ENCODE measurements at regions of chr2 and their contacts with region 1.

Region 1: GRCh38 chr2:191051825-191052778 is 38.1 kb upstream of the STAT1 start:
- DNase-seq: peak; percentile 75
- H3K4me3 ChIP-seq: no peak overlapping the region
- H3K27ac ChIP-seq: no peak overlapping the region
- H3K4me1 ChIP-seq: peaks cover 5% of the 10 kb centered on the region
- H3K27me3 ChIP-seq: peaks cover 4 to 8% of the 10 kb centered on the region in 2 experiments
- CTCF ChIP-seq: peak; percentile 27 to 38
- POLR2A ChIP-seq: no peak

Region 2: GRCh38 chr2:191038241-191038725 is 13.8 kb before region 1 on chr2:
- CTCF ChIA-PET with region 1: interaction called, 56 read pairs
- POLR2A ChIA-PET with region 1: no interaction called
- dilution Hi-C with region 1: no loop called
- intact Hi-C with region 1: no loop called
- DNase-seq: peak; percentile 57
- H3K4me3 ChIP-seq: no peak overlapping the region
- H3K27ac ChIP-seq: no peak overlapping the region
- H3K4me1 ChIP-seq: peaks cover 26% of the 10 kb centered on the region
- H3K27me3 ChIP-seq: no peaks in the 10 kb centered on the region
- CTCF ChIP-seq: no peak
- POLR2A ChIP-seq: no peak

Region 3: DNA sequence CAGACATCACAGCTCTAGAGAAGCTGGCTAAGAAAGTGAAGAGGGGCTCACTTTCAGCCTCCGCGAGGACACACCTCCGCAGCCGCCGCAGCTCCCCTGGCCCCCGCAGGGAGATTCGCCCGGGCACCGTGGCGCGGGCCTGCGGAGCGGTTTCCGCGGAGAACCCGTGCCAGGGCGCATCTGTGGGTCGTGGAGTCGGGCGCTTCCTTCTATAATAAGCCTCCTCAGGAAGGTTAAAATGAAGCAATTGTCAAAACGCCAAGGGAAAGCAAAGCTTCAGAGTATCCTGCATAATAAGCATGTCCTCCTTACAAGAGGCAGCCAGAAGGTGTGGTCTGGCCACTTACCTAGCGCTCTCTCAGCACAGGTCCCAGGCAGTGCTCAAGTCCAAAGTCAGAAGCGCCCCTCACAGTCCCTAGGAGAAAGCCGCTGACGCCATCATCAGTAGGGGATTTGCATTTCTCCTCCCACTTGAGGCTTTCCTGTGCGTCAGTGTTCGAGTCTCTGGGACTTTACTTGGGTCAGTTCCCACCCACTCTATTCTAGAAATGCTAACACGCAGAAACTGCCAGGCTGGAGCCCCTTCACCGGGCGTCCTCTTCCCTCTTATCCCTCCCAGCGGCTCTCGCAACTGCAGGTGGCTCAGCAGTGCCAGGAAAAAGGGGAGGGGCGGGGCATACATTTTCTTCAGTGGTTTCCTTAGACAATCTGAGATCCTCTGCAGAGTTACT is 98.7 kb after region 1 on chr2 and contains the start of gene STAT4:
- CTCF ChIA-PET with region 1: interaction called, 358 read pairs
- POLR2A ChIA-PET with region 1: no interaction called
- dilution Hi-C with region 1: no loop called
- intact Hi-C with region 1: loop called (anchors 1 kb)
- DNase-seq: peak; percentile 58
- H3K4me3 ChIP-seq: peak within 1 kb of the TSS; percentile 13 to 54 (median 45)
- H3K27ac ChIP-seq: no peak within 1 kb of the TSS
- H3K4me1 ChIP-seq: no peaks in the 10 kb centered on the region
- H3K27me3 ChIP-seq: peaks cover 3 to 6% of the 10 kb centered on the region in 2 experiments
- CTCF ChIP-seq: no peak
- POLR2A ChIP-seq: no peak
- total RNA-seq, gene STAT4: 0.46 and 0.88 TPM in 2 replicates

Region 4: GRCh38 chr2:191165176-191165643 is 113.1 kb after region 1 on chr2:
- CTCF ChIA-PET with region 1: interaction called, 38 read pairs
- POLR2A ChIA-PET with region 1: no interaction called
- dilution Hi-C with region 1: no loop called
- intact Hi-C with region 1: no loop called
- DNase-seq: peak; percentile 68
- H3K4me3 ChIP-seq: no peak overlapping the region
- H3K27ac ChIP-seq: no peak overlapping the region
- H3K4me1 ChIP-seq: peaks cover 3% of the 10 kb centered on the region
- H3K27me3 ChIP-seq: no peaks in the 10 kb centered on the region
- CTCF ChIP-seq: peak; percentile 48 to 52
- POLR2A ChIP-seq: no peak

Region 5: DNA sequence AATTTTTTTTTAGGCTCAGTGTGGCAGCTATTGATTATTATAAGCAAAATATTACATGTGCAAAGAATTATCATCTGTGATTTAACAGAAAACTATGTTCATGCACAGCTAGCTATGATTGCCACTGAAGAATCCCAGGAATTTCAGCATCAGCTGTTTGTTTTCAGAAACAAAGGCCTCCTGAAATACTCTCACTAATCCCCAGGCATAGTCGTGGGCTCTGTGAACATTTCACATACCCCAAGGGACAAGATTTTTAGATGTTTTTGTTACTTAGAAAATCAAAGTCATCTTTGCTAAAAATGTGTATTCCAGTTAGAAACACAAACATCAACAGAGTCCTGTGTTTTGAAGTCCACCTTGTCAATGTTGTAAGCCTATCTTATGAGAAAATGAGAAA is 349.2 kb after region 1 on chr2:
- CTCF ChIA-PET with region 1: no interaction called
- POLR2A ChIA-PET with region 1: no interaction called
- dilution Hi-C with region 1: no loop called
- intact Hi-C with region 1: no loop called
- DNase-seq: no peak
- H3K4me3 ChIP-seq: no peak overlapping the region
- H3K27ac ChIP-seq: no peak overlapping the region
- H3K4me1 ChIP-seq: no peaks in the 10 kb centered on the region
- H3K27me3 ChIP-seq: no peaks in the 10 kb centered on the region
- CTCF ChIP-seq: no peak
- POLR2A ChIP-seq: no peak

Region 6: GRCh38 chr2:191515551-191515950 is 463.4 kb after region 1 on chr2:
- CTCF ChIA-PET with region 1: interaction called, 12 read pairs
- POLR2A ChIA-PET with region 1: no interaction called
- dilution Hi-C with region 1: no loop called
- intact Hi-C with region 1: loop called (anchors 2 kb)
- DNase-seq: no peak
- H3K4me3 ChIP-seq: no peak overlapping the region
- H3K27ac ChIP-seq: no peak overlapping the region
- H3K4me1 ChIP-seq: no peaks in the 10 kb centered on the region
- H3K27me3 ChIP-seq: peaks cover 3 to 12% of the 10 kb centered on the region in 2 experiments
- CTCF ChIP-seq: no peak
- POLR2A ChIP-seq: no peak

Region 7: GRCh38 chr2:191611614-191612013 is 559.5 kb after region 1 on chr2:
- CTCF ChIA-PET with region 1: no interaction called
- POLR2A ChIA-PET with region 1: no interaction called
- dilution Hi-C with region 1: no loop called
- intact Hi-C with region 1: no loop called
- DNase-seq: no peak
- H3K4me3 ChIP-seq: no peak overlapping the region
- H3K27ac ChIP-seq: no peak overlapping the region
- H3K4me1 ChIP-seq: peaks cover 9% of the 10 kb centered on the region
- H3K27me3 ChIP-seq: no peaks in the 10 kb centered on the region
- CTCF ChIP-seq: no peak
- POLR2A ChIP-seq: no peak